ENCODE measurements at regions of chr7 and their contacts with region 1.

Region 1: DNA sequence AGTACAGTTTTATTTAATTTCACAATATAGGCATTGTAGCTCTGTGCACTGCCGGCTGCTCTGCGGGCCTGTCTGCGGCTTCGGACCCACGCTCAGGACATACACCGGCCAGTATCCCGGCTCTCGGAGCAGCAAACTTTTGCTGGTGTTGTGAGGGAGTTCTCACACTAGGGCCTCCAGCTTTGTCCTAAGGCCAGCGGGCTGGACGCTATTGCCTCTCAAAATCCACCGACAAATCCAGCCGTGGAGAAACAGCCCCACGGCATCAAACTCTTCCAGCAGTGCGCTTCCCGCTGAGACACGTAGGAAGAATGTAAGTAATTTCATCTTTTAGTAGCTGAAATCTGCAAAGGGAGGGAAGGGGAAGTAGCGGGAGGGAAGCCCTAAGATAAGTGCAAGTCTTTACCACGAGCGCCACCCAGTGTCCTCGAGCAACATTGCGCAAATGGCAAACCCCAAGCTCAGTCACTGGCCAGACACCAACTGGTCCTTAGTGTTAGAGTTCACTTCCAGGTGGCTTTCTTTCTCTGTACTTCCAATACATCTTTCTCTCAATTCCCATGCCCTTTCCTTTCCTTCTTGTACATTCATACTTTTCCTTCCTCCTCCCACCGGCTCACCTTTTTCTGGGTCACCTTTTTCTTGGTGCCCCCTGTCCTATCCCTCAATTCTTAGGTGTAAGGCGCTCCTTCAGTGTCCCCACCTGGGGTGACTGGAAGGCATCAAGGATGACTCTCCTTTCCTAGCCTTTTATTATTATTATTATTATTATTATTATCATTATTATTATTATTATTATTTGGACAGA is 3.0 kb upstream of the DLX5 start:
- DNase-seq: peak; percentile 86
- H3K4me3 ChIP-seq: peak overlapping the region; percentile 1 to 65 (median 33)
- H3K27ac ChIP-seq: no peak overlapping the region
- H3K4me1 ChIP-seq: peaks cover 15 to 49% (median 26%) of the 10 kb centered on the region in 6 donors
- H3K27me3 ChIP-seq: peaks cover 0 to 95% (median 48%) of the 10 kb centered on the region in 7 donors
- CTCF ChIP-seq: peak; percentile 67 to 88 (median 80)
- POLR2A ChIP-seq: no peak

Region 2: GRCh38 chr7:96074871-96075270 is 952.8 kb before region 1 on chr7:
- intact Hi-C with region 1: loop called (anchors 5 kb)
- DNase-seq: no peak
- H3K4me3 ChIP-seq: no peak overlapping the region
- H3K27ac ChIP-seq: no peak overlapping the region
- H3K4me1 ChIP-seq: peaks cover 0 to 17% (median 10%) of the 10 kb centered on the region in 6 donors
- H3K27me3 ChIP-seq: peaks cover 0 to 40% (median 16%) of the 10 kb centered on the region in 7 donors
- CTCF ChIP-seq: no peak
- POLR2A ChIP-seq: no peak